Vagina (tissue), 2 donors: ENCODE measurements at regions of chr7 and their contacts with region 1.

Region 1: GRCh38 chr7:148611692-148612091 is 21.1 kb downstream of the C7orf33 start:
- DNase-seq: no peak
- H3K4me3 ChIP-seq: no peak overlapping the region
- H3K27ac ChIP-seq: no peak overlapping the region
- H3K4me1 ChIP-seq: no peaks in the 10 kb centered on the region
- H3K27me3 ChIP-seq: no peaks in the 10 kb centered on the region
- CTCF ChIP-seq: no peak
- POLR2A ChIP-seq: no peak

Region 2: GRCh38 chr7:148657929-148658328 is 46.2 kb after region 1 on chr7:
- intact Hi-C with region 1: loop called (anchors 2 kb)
- DNase-seq: no peak
- H3K4me3 ChIP-seq: no peak overlapping the region
- H3K27ac ChIP-seq: no peak overlapping the region
- H3K4me1 ChIP-seq: no peaks in the 10 kb centered on the region
- H3K27me3 ChIP-seq: no peaks in the 10 kb centered on the region
- CTCF ChIP-seq: no peak
- POLR2A ChIP-seq: no peak

Region 3: GRCh38 chr7:150342121-150342408 is 1730.4 kb after region 1 on chr7:
- intact Hi-C with region 1: no loop called
- DNase-seq: no peak
- H3K4me3 ChIP-seq: peak overlapping the region; percentile 65 to 69
- H3K27ac ChIP-seq: peak overlapping the region; percentile 78
- H3K4me1 ChIP-seq: peaks cover 32% of the 10 kb centered on the region
- H3K27me3 ChIP-seq: no peaks in the 10 kb centered on the region
- CTCF ChIP-seq: no peak
- POLR2A ChIP-seq: no peak